Right lobe of liver (tissue), 6 donors: ENCODE measurements at regions of chr11 and their contacts with region 1.

Region 1: GRCh38 chr11:111770581-111771134 is 4.5 kb upstream of the PPP2R1B start:
- DNase-seq: no peak
- ATAC-seq: no peak
- H3K4me3 ChIP-seq: no peak overlapping the region
- H3K27ac ChIP-seq: peak overlapping the region in 2 of 3 donors; percentile 11 to 91
- H3K4me1 ChIP-seq: peaks cover 0 to 46% (median 19%) of the 10 kb centered on the region in 4 donors
- H3K27me3 ChIP-seq: no peaks in the 10 kb centered on the region
- CTCF ChIP-seq: no peak
- POLR2A ChIP-seq: no peak

Region 2: GRCh38 chr11:111735262-111736116 is 35.2 kb before region 1 on chr11:
- intact Hi-C with region 1: loop called in 1 of 2 experiments (anchors 5 kb)
- DNase-seq: peak; percentile 79 to 87 (median 85)
- ATAC-seq: peak; percentile 37 to 53 (median 48)
- H3K4me3 ChIP-seq: peak overlapping the region in 2 of 3 donors; percentile 43 to 48
- H3K27ac ChIP-seq: peak overlapping the region; percentile 93 to 99 (median 99)
- H3K4me1 ChIP-seq: peaks cover 7 to 78% (median 41%) of the 10 kb centered on the region in 4 donors
- H3K27me3 ChIP-seq: no peaks in the 10 kb centered on the region
- CTCF ChIP-seq: no peak
- POLR2A ChIP-seq: peak; percentile 65